Head of caudate nucleus (tissue), 42 donors: ENCODE measurements at regions of chr13 and their contacts with region 1.

Region 1: GRCh38 chr13:75530536-75530935 is 7.1 kb downstream of the COMMD6 start:
- DNase-seq: no peak

Region 2: DNA sequence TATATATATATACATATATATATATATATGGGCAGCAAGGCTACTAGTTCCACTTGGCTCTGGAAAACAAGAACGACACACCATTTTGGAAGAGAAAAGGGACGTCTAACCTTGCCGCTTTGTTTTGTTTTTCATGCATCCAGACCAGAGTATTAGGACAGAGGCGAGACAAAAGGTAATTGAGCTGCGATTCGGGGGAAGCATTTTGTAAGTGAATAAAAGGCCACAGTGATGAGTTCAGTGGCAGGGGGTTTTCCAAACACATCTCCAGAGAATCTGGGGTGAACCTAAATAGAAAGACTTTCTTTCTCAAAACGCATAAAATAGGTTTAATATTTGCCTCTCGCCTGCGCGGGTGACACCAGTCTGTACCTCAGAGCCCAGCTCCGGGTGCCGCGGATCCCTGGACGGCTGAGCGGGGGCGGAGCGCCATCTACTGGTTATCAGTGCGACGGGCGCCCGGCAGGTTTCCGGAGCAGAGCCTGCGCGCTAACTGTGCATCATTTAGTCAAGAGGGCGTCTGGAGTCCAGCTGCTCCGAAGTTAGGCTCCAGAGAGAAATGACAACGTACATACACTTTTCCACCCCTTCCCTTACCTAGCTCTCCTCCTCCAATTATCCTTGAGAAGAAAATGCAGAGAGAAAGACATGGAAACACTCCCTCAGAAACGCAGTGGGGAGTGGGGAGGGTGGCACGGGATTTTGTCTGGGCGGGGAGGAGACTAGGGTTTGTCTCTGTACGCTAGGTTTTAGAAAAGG is 310.9 kb before region 1 on chr13:
- intact Hi-C with region 1: no loop called
- DNase-seq: peak; percentile 80 to 96 (median 90)

Region 3: GRCh38 chr13:75258159-75258782 is 272.3 kb before region 1 on chr13:
- intact Hi-C with region 1: no loop called
- DNase-seq: no peak

Region 4: DNA sequence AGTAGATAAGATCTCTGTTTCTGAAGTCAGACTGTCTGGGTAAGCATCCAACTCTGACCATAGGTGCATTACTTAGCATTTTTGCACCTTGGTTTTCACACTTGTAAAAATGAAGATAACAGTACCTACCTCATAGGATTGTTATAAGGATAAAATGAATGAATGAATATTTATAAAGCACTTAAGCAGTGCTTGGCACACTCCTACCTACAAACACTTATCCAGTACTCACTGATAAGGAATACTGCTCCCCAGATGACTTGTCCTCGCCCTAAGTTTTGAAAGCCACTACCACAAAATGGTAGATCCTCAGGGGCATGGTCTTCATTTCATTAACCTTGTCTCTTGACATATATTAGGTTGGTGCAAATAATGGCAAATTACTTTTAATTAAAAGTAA is 19.3 kb before region 1 on chr13:
- intact Hi-C with region 1: loop called (anchors 2 kb)
- DNase-seq: no peak